Esophagus muscularis mucosa (tissue), 4 donors: ENCODE measurements at regions of chr10 and their contacts with region 1.

Region 1: GRCh38 chr10:123800289-123800688 is 91.3 kb downstream of the CPXM2 start:
- DNase-seq: peak; percentile 92
- H3K4me3 ChIP-seq: peak overlapping the region in 1 of 4 donors; percentile 27
- H3K27ac ChIP-seq: peak overlapping the region; percentile 60 to 85 (median 79)
- H3K4me1 ChIP-seq: peaks cover 4 to 46% (median 31%) of the 10 kb centered on the region in 4 donors
- H3K27me3 ChIP-seq: no peaks in the 10 kb centered on the region
- CTCF ChIP-seq: no peak
- EP300 ChIP-seq: no peak
- POLR2A ChIP-seq: no peak

Region 2: GRCh38 chr10:123868038-123869019 is 68.0 kb after region 1 on chr10:
- intact Hi-C with region 1: loop called (anchors 5 kb)
- DNase-seq: no peak
- H3K4me3 ChIP-seq: no peak overlapping the region
- H3K27ac ChIP-seq: peak overlapping the region; percentile 89 to 95 (median 92)
- H3K4me1 ChIP-seq: peaks cover 0 to 82% (median 74%) of the 10 kb centered on the region in 4 donors
- H3K27me3 ChIP-seq: no peaks in the 10 kb centered on the region
- CTCF ChIP-seq: no peak
- EP300 ChIP-seq: no peak
- POLR2A ChIP-seq: no peak

Region 3: GRCh38 chr10:123897146-123897545 is 96.9 kb after region 1 on chr10:
- intact Hi-C with region 1: no loop called
- DNase-seq: no peak
- H3K4me3 ChIP-seq: no peak overlapping the region
- H3K27ac ChIP-seq: peak overlapping the region; percentile 65 to 75 (median 68)
- H3K4me1 ChIP-seq: peaks cover under 1 to 34% (median 27%) of the 10 kb centered on the region in 4 donors
- H3K27me3 ChIP-seq: peaks cover 0 to 1% (median 0%) of the 10 kb centered on the region in 4 donors
- CTCF ChIP-seq: peak; percentile 14 to 25 (median 21)
- EP300 ChIP-seq: no peak
- POLR2A ChIP-seq: no peak